Activated CD8-positive, alpha-beta memory T cell treated with anti-CD3 and anti-CD28 coated beads, Interleukin-2, amount 10 ng/mL, durations not matched to agents 7 days and 5 days (primary cell): ENCODE measurements at regions of chr19 and their contacts with region 1.

Region 1: DNA sequence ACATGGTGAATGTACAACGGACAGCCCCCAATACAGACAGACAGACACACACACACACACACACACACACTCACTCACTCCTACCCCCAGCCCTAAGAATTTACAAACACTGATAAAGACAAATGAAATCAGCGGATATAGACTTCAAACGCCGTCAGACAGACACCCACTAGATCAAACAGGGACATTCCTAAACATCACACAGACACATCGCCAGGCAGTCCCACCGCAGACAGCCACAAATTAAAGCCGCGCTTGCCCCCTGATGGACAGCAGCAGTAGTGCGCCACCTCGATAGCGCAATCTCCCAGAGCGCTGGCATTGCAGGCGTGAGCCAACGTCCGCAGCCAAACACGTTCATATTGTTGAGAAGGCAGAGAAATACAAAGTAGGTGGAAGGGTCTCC is 24.7 kb upstream of the ADGRE1 start:
- DNase-seq: peak; percentile 94
- ATAC-seq: peak; percentile 88
- H3K4me3 Mint-ChIP-seq: peak overlapping the region; percentile 72
- H3K27ac Mint-ChIP-seq: peak overlapping the region; percentile 82
- H3K4me1 Mint-ChIP-seq: peaks cover 12% of the 10 kb centered on the region
- H3K27me3 Mint-ChIP-seq: no peaks in the 10 kb centered on the region

Region 2: DNA sequence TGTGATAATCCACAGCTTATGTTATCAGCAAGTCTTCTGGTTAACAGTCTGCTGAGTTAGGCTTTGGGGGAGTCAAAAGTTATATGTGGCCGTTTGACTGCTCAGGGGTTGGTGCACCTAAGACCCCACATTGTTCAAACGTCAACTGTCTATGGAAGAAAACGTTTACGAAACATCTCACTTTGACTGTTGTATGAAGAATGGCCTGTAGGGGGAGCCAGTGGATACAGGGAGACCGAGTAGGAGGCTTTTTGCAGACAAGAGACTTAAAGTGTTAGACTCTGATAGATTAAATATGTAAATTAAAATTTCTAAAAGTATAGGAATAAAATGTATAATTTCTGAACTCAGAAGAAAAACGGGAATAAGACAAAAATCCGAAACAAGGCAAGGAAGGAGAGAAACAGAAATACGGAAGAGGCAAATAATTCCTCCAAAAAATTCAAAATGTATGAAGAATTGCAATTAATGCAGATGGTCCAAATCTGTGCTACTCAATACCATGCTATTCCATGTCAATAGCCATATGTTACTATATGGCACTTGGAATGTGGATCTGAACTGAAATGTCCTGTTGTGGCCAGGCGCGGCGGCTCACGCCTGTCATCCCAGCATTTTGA is 230.6 kb before region 1 on chr19:
- CTCF ChIA-PET with region 1: interaction called, 20 read pairs
- DNase-seq: peak; percentile 89
- ATAC-seq: peak; percentile 85
- H3K4me3 Mint-ChIP-seq: no peak overlapping the region
- H3K27ac Mint-ChIP-seq: peak overlapping the region; percentile 52
- H3K4me1 Mint-ChIP-seq: peaks cover 30% of the 10 kb centered on the region
- H3K27me3 Mint-ChIP-seq: no peaks in the 10 kb centered on the region

Region 3: GRCh38 chr19:6639439-6639838 is 223.2 kb before region 1 on chr19:
- CTCF ChIA-PET with region 1: interaction called, 13 read pairs
- DNase-seq: peak; percentile 84
- ATAC-seq: peak; percentile 87
- H3K4me3 Mint-ChIP-seq: no peak overlapping the region
- H3K27ac Mint-ChIP-seq: peak overlapping the region; percentile 38
- H3K4me1 Mint-ChIP-seq: peaks cover 47% of the 10 kb centered on the region
- H3K27me3 Mint-ChIP-seq: no peaks in the 10 kb centered on the region

Region 4: DNA sequence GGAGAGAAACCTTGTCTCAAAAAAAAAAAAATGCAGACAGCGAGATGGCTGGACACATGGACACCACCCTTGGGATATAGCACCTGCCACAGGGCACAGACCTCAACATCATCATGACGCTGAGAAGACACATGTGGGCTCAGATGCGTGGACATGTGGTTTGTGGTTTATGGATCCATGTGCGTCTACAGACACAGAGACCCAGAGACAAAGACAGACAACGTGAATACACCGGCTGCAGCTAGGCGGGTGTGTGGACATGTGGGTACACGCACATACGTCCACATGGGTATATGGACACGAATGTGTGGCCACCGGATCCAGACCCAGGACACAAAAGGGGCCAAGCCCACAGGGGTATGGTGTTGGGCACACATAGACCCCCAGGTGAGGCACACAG is 194.0 kb before region 1 on chr19:
- CTCF ChIA-PET with region 1: interaction called, 11 read pairs
- DNase-seq: peak; percentile 58
- ATAC-seq: no peak
- H3K4me3 Mint-ChIP-seq: peak overlapping the region; percentile 99
- H3K27ac Mint-ChIP-seq: peak overlapping the region; percentile 90
- H3K4me1 Mint-ChIP-seq: peaks cover 44% of the 10 kb centered on the region
- H3K27me3 Mint-ChIP-seq: peaks cover 9% of the 10 kb centered on the region

Region 5: GRCh38 chr19:6744381-6745291 is 118.0 kb before region 1 on chr19:
- CTCF ChIA-PET with region 1: interaction called, 127 read pairs
- DNase-seq: no peak
- ATAC-seq: no peak
- H3K4me3 Mint-ChIP-seq: no peak overlapping the region
- H3K27ac Mint-ChIP-seq: no peak overlapping the region
- H3K4me1 Mint-ChIP-seq: peaks cover 4% of the 10 kb centered on the region
- H3K27me3 Mint-ChIP-seq: no peaks in the 10 kb centered on the region

Region 6: DNA sequence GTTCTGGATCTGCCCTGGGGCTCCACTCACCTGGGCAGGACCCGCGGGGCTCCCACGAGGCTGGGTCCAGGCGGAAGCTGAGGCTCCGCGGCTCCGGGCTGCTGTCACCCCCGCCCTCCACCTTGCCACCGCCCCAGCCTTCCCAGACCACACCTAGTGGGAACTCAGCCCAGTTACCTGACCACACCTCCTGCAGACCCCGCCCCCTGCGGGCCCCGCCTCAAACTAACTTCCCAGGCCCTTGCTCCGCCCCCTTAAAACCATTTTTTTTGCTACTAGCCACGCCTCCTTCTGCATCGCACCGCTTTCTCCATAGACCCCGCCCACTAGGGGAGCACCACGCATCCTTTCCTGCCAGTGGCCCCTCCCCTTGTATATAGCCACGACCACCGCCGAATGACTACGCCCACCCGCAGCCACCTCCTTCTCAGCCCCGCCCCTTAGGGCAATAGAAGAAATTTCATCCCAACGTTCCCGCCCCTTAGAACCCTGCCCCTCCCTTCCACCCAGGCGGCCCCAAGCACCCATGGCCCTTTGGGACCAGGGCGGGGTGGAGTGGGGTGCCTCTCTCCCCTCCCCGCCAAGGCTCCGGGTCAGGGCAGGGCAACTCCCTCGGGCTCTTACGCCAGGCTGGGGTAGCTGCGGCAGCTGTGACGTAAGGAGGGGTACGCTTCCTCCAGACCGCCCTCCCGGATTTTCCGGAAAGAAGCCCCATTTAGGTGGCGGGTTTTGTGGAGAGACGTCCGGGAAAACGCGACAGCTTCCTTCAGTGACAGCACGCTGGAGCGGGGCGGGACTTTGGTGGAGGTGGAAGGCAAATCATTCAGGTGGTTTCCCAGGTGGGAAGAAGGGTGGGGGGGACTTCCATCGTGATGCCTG is 95.1 kb before region 1 on chr19 and contains the start of gene SH2D3A:
- CTCF ChIA-PET with region 1: interaction called, 22 read pairs
- DNase-seq: peak; percentile 98
- ATAC-seq: peak; percentile 77
- H3K4me3 Mint-ChIP-seq: peak within 1 kb of the TSS; percentile 91
- H3K27ac Mint-ChIP-seq: peak within 1 kb of the TSS; percentile 93
- H3K4me1 Mint-ChIP-seq: peaks cover 38% of the 10 kb centered on the region
- H3K27me3 Mint-ChIP-seq: no peaks in the 10 kb centered on the region
- total RNA-seq, gene SH2D3A: 13.8 to 22.3 TPM

Region 7: DNA sequence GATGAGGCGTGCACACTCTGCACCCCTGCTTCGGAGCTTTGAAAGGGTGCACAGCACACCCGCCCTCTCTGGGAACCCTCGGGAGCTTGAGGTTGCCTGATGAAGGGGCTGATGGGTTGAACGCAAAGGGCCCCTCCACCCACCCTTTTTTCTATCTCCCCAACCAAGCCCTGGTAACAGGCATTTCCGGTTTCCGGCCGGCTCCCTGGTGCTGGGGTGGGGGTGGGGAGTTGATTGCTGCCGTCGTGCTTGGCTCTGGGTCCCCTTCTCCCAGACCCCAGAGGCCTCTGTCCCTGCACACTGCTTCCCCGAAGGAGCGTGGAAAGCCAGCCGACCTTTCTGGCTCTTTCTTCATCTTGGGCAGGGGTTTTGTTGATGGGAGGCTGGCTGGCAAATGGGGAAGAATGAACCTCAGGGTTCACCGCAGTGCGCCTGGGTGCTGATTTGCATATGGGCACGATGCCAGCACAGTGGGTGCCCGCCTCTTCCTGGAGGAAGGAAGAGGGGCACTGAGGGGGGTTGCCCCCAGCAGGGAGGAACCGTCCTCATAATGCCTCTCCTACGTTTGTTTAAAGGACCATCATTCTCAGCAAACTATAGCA is 61.1 kb before region 1 on chr19:
- CTCF ChIA-PET with region 1: interaction called, 10 read pairs
- DNase-seq: peak; percentile 90
- ATAC-seq: peak; percentile 74
- H3K4me3 Mint-ChIP-seq: peak overlapping the region; percentile 78
- H3K27ac Mint-ChIP-seq: peak overlapping the region; percentile 93
- H3K4me1 Mint-ChIP-seq: peaks cover 54% of the 10 kb centered on the region
- H3K27me3 Mint-ChIP-seq: no peaks in the 10 kb centered on the region

Region 8: GRCh38 chr19:6903452-6903851 is 40.8 kb after region 1 on chr19:
- CTCF ChIA-PET with region 1: no interaction called
- DNase-seq: no peak
- ATAC-seq: no peak
- H3K4me3 Mint-ChIP-seq: no peak overlapping the region
- H3K27ac Mint-ChIP-seq: no peak overlapping the region
- H3K4me1 Mint-ChIP-seq: no peaks in the 10 kb centered on the region
- H3K27me3 Mint-ChIP-seq: no peaks in the 10 kb centered on the region